ENCODE measurements at regions of chr12 and their contacts with region 1.

Region 1: GRCh38 chr12:71663561-71664294 is at the start of gene ZFC3H1:
- DNase-seq: peak; percentile 88 to 97
- ATAC-seq: peak; percentile 96 to 98 (median 97)
- H3K4me3 ChIP-seq: peak within 1 kb of the TSS; percentile 74 to 98 (median 85)
- H3K27ac ChIP-seq: peak within 1 kb of the TSS; percentile 84 to 98 (median 94)
- H3K4me1 ChIP-seq: peaks cover 0 to 37% (median 34%) of the 10 kb centered on the region in 9 donors
- H3K27me3 ChIP-seq: no peaks in the 10 kb centered on the region
- CTCF ChIP-seq: peak in 6 of 9 donors; percentile 12 to 60 (median 36)
- total RNA-seq, gene ZFC3H1: 13.6 to 26.5 (median 17.2) TPM

Region 2: GRCh38 chr12:71685914-71686665 is 22.4 kb after region 1 on chr12 and contains the start of gene TMEM19:
- intact Hi-C with region 1: loop called in 4 of 10 experiments (anchors 1 to 2 kb)
- DNase-seq: peak; percentile 90 to 92
- ATAC-seq: peak; percentile 99 to 100 (median 99)
- H3K4me3 ChIP-seq: peak within 1 kb of the TSS; percentile 48 to 78 (median 68)
- H3K27ac ChIP-seq: peak within 1 kb of the TSS; percentile 58 to 96 (median 92)
- H3K4me1 ChIP-seq: peaks cover 0 to 42% (median 29%) of the 10 kb centered on the region in 9 donors
- H3K27me3 ChIP-seq: no peaks in the 10 kb centered on the region
- CTCF ChIP-seq: peak in 6 of 9 donors; percentile 14 to 63 (median 42)
- total RNA-seq, gene TMEM19: 17.4 to 32.2 (median 27.6) TPM

Region 3: GRCh38 chr12:71754461-71755145 is 90.9 kb after region 1 on chr12 and contains the start of gene RAB21:
- intact Hi-C with region 1: loop called in 4 of 10 experiments (anchors 5 to 10 kb)
- DNase-seq: peak; percentile 99
- ATAC-seq: peak; percentile 96 to 98 (median 98)
- H3K4me3 ChIP-seq: peak within 1 kb of the TSS; percentile 75 to 97 (median 88)
- H3K27ac ChIP-seq: peak within 1 kb of the TSS; percentile 93 to 99 (median 96)
- H3K4me1 ChIP-seq: peaks cover 0 to 44% (median 32%) of the 10 kb centered on the region in 9 donors
- H3K27me3 ChIP-seq: peaks cover 0 to 14% (median 0%) of the 10 kb centered on the region in 7 donors
- CTCF ChIP-seq: peak in 7 of 9 donors; percentile 23 to 53 (median 34)
- total RNA-seq, gene RAB21: 137 to 271 (median 211) TPM

Region 4: DNA sequence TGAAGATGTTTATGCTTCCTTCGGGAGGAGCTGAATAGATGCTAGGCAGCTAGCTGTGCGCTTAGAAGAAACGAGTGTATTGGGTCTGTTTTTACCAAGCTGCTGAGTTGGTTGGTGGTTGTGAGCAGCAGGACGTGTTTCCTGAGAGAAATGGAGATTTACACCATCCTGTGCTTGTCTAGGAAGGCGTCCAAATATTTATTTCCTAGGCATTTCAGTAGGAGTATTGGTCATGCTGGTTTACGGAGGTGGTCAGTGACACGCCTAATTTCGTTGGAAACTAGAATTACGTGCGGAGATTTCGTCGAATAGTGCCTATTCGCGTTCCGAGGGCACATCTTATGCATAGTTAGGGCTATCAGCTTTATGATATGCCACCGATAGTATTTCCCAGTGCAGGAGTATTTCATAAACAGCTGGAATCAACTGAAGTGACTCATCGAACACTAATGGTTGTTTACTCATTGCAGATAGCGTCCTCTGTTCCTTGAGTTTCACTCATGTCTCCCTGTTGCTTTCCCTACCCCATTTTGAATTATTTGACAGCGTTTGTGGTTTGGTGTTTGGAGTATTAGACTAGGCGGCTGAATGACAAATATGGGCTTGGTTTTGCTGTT is 176.6 kb after region 1 on chr12:
- intact Hi-C with region 1: loop called in 2 of 10 experiments (anchors 1 to 10 kb)
- DNase-seq: peak in 1 of 2 donors; percentile 10
- ATAC-seq: peak in 6 of 8 donors; percentile 2 to 58 (median 41)
- H3K4me3 ChIP-seq: peak overlapping the region; percentile 63 to 80 (median 69)
- H3K27ac ChIP-seq: peak overlapping the region; percentile 89 to 96 (median 93)
- H3K4me1 ChIP-seq: peaks cover 0 to 58% (median 46%) of the 10 kb centered on the region in 9 donors
- H3K27me3 ChIP-seq: no peaks in the 10 kb centered on the region
- CTCF ChIP-seq: no peak